ENCODE measurements at regions of chr5 and their contacts with region 1.

Region 1: GRCh38 chr5:93342563-93343061 is 238.4 kb downstream of the NR2F1-AS1 start:
- DNase-seq: no peak
- ATAC-seq: no peak
- H3K4me3 ChIP-seq: no peak overlapping the region
- H3K27ac ChIP-seq: peak overlapping the region; percentile 8; the same call in 1 of the 2 replicates
- H3K4me1 ChIP-seq: peaks cover 6% of the 10 kb centered on the region; the same call in 1 of the 2 replicates
- H3K27me3 ChIP-seq: no peaks in the 10 kb centered on the region
- CTCF ChIP-seq: no peak

Region 2: GRCh38 chr5:93208141-93208751 is 134.4 kb before region 1 on chr5:
- CTCF ChIA-PET with region 1: interaction called, 14 read pairs
- POLR2A ChIA-PET with region 1: no interaction called
- in situ Hi-C with region 1: no loop called
- intact Hi-C with region 1: no loop called
- DNase-seq: no peak
- ATAC-seq: no peak
- H3K4me3 ChIP-seq: no peak overlapping the region
- H3K27ac ChIP-seq: no peak overlapping the region
- H3K4me1 ChIP-seq: no peaks in the 10 kb centered on the region
- H3K27me3 ChIP-seq: no peaks in the 10 kb centered on the region
- CTCF ChIP-seq: no peak

Measured in Panc1 (cell line).